Right cardiac atrium (tissue), 5 donors: ENCODE measurements at regions of chr3 and their contacts with region 1.

Region 1: DNA sequence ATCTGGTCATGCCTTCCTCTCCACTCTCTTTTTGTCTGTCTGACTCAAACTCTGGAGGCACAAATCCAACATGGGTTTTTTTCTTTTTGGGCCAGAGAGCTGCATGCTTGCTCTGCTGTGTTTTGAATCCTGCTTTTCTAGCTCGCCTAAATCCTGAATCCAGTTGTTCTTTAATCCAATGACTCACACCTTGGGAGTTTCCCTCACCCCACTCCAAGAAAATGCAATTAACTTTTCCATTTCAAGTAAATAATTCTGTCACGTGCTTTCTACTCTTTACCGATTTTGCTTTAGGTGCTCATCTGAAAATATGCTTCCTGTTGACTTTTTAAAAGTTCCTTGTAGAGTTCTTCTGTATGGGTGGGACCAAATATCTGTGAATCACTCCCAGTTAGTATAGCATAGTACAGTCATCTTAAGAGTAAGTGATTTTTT is 47.6 kb downstream of the SLMAP start:
- DNase-seq: no peak
- ATAC-seq: peak; percentile 80 to 92
- H3K4me3 ChIP-seq: no peak overlapping the region
- H3K27ac ChIP-seq: no peak overlapping the region
- H3K4me1 ChIP-seq: peaks cover 3% of the 10 kb centered on the region
- H3K27me3 ChIP-seq: no peaks in the 10 kb centered on the region

Region 2: DNA sequence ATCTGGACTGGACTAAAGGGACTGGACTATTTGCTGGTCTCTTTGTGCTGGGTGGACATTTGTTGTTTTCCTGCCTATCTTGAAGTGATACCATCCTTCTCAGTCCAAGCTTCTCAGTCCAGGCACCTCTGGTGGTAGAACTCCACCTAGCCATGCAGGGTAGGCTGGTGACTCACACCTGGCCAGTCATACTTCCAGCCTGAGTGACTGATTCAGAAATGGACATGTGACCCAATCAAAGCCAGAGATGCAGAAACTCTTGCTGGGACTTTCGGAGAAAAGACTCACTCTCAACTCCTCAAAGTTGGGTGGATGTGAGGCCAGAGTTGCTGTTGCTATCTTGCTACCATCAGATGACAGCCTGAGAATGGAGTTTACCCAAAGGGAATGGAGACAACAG is 505.6 kb before region 1 on chr3:
- intact Hi-C with region 1: no loop called
- DNase-seq: no peak
- ATAC-seq: no peak
- H3K4me3 ChIP-seq: no peak overlapping the region
- H3K27ac ChIP-seq: no peak overlapping the region
- H3K4me1 ChIP-seq: no peaks in the 10 kb centered on the region
- H3K27me3 ChIP-seq: no peaks in the 10 kb centered on the region

Region 3: GRCh38 chr3:57572096-57572495 is 231.6 kb before region 1 on chr3:
- intact Hi-C with region 1: no loop called
- DNase-seq: no peak
- ATAC-seq: no peak
- H3K4me3 ChIP-seq: no peak overlapping the region
- H3K27ac ChIP-seq: no peak overlapping the region
- H3K4me1 ChIP-seq: no peaks in the 10 kb centered on the region
- H3K27me3 ChIP-seq: no peaks in the 10 kb centered on the region

Region 4: GRCh38 chr3:57764794-57765193 is 38.9 kb before region 1 on chr3:
- intact Hi-C with region 1: loop called in 1 of 4 experiments (anchors 5 kb)
- DNase-seq: no peak
- ATAC-seq: no peak
- H3K4me3 ChIP-seq: no peak overlapping the region
- H3K27ac ChIP-seq: no peak overlapping the region
- H3K4me1 ChIP-seq: peaks cover 6% of the 10 kb centered on the region
- H3K27me3 ChIP-seq: no peaks in the 10 kb centered on the region

Region 5: GRCh38 chr3:58544541-58544940 is 740.9 kb after region 1 on chr3:
- intact Hi-C with region 1: no loop called
- DNase-seq: no peak
- ATAC-seq: no peak
- H3K4me3 ChIP-seq: no peak overlapping the region
- H3K27ac ChIP-seq: no peak overlapping the region
- H3K4me1 ChIP-seq: no peaks in the 10 kb centered on the region
- H3K27me3 ChIP-seq: no peaks in the 10 kb centered on the region